H1 (cell line): ENCODE measurements at regions of chr3 and their contacts with region 1.

Region 1: GRCh38 chr3:109081746-109082510 is 36.0 kb downstream of the MORC1 start:
- DNase-seq: peak; percentile 31 to 62
- H3K4me3 ChIP-seq: no peak overlapping the region
- H3K27ac ChIP-seq: no peak overlapping the region
- H3K4me1 ChIP-seq: peaks cover 0 to 3% (median 0%) of the 10 kb centered on the region in 4 experiments; a peak in 3 of 7 replicates
- H3K27me3 ChIP-seq: no peaks in the 10 kb centered on the region
- CTCF ChIP-seq: peak in 2 of 3 experiments; percentile 64 to 80; a peak in 3 of 4 replicates
- EP300 ChIP-seq: no peak
- POLR2A ChIP-seq: no peak
- RAD21 ChIP-seq: peak; percentile 90 to 95

Region 2: GRCh38 chr3:109033000-109033660 is 48.8 kb before region 1 on chr3:
- CTCF ChIA-PET with region 1: interaction called, 13 read pairs
- POLR2A ChIA-PET with region 1: no interaction called
- DNase-seq: no peak
- H3K4me3 ChIP-seq: no peak overlapping the region
- H3K27ac ChIP-seq: no peak overlapping the region
- H3K4me1 ChIP-seq: no peaks in the 10 kb centered on the region
- H3K27me3 ChIP-seq: no peaks in the 10 kb centered on the region
- CTCF ChIP-seq: no peak
- EP300 ChIP-seq: no peak
- POLR2A ChIP-seq: no peak
- RAD21 ChIP-seq: no peak

Region 3: GRCh38 chr3:109071350-109072142 is 10.4 kb before region 1 on chr3:
- CTCF ChIA-PET with region 1: interaction called, 11 read pairs
- POLR2A ChIA-PET with region 1: no interaction called
- DNase-seq: no peak
- H3K4me3 ChIP-seq: no peak overlapping the region
- H3K27ac ChIP-seq: no peak overlapping the region
- H3K4me1 ChIP-seq: no peaks in the 10 kb centered on the region
- H3K27me3 ChIP-seq: no peaks in the 10 kb centered on the region
- CTCF ChIP-seq: peak in 1 of 3 experiments; percentile 18; a peak in 2 of 4 replicates
- EP300 ChIP-seq: no peak
- POLR2A ChIP-seq: no peak
- RAD21 ChIP-seq: peak; percentile 33 to 41

Region 4: GRCh38 chr3:109098079-109098644 is 16.2 kb after region 1 on chr3:
- CTCF ChIA-PET with region 1: interaction called, 17 read pairs
- POLR2A ChIA-PET with region 1: no interaction called
- DNase-seq: no peak
- H3K4me3 ChIP-seq: no peak overlapping the region
- H3K27ac ChIP-seq: no peak overlapping the region
- H3K4me1 ChIP-seq: no peaks in the 10 kb centered on the region
- H3K27me3 ChIP-seq: no peaks in the 10 kb centered on the region
- CTCF ChIP-seq: peak; percentile 64 to 81 (median 76)
- EP300 ChIP-seq: no peak
- POLR2A ChIP-seq: no peak
- RAD21 ChIP-seq: peak; percentile 68 to 77

Region 5: GRCh38 chr3:109122690-109123089 is 40.8 kb after region 1 on chr3:
- CTCF ChIA-PET with region 1: no interaction called
- POLR2A ChIA-PET with region 1: no interaction called
- DNase-seq: no peak
- H3K4me3 ChIP-seq: no peak overlapping the region
- H3K27ac ChIP-seq: no peak overlapping the region
- H3K4me1 ChIP-seq: no peaks in the 10 kb centered on the region
- H3K27me3 ChIP-seq: no peaks in the 10 kb centered on the region
- CTCF ChIP-seq: no peak
- EP300 ChIP-seq: no peak
- POLR2A ChIP-seq: no peak
- RAD21 ChIP-seq: no peak

Region 6: DNA sequence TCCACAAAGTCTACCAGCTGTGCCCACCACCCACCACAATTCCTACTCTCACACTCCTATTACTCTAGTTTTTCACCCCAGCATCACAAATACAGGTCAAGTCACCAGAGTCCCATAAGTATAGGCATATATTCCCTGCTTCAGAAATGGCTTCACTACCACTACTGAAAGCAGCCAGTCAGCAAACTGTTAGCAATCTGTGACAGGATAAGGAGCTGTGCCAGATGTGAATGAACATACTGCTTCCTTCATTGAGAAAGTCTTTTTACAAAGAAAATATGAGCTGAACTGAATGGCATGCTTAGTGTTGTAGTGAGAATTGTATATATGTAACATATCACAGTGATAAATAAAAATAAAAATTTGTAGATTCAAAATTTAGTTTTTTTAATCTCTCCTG is 131.4 kb after region 1 on chr3:
- CTCF ChIA-PET with region 1: no interaction called
- POLR2A ChIA-PET with region 1: no interaction called
- DNase-seq: no peak
- H3K4me3 ChIP-seq: no peak overlapping the region
- H3K27ac ChIP-seq: no peak overlapping the region
- H3K4me1 ChIP-seq: no peaks in the 10 kb centered on the region
- H3K27me3 ChIP-seq: no peaks in the 10 kb centered on the region
- CTCF ChIP-seq: no peak
- EP300 ChIP-seq: no peak
- POLR2A ChIP-seq: no peak
- RAD21 ChIP-seq: no peak

Region 7: GRCh38 chr3:109224333-109224732 is 142.4 kb after region 1 on chr3:
- CTCF ChIA-PET with region 1: no interaction called
- POLR2A ChIA-PET with region 1: no interaction called
- DNase-seq: peak; percentile 36 to 77
- H3K4me3 ChIP-seq: no peak overlapping the region
- H3K27ac ChIP-seq: no peak overlapping the region
- H3K4me1 ChIP-seq: no peaks in the 10 kb centered on the region
- H3K27me3 ChIP-seq: no peaks in the 10 kb centered on the region
- CTCF ChIP-seq: peak; percentile 77 to 92 (median 89)
- EP300 ChIP-seq: no peak
- POLR2A ChIP-seq: no peak
- RAD21 ChIP-seq: peak; percentile 83 to 87